ENCODE measurements at regions of chr1 and their contacts with region 1.

Region 1: DNA sequence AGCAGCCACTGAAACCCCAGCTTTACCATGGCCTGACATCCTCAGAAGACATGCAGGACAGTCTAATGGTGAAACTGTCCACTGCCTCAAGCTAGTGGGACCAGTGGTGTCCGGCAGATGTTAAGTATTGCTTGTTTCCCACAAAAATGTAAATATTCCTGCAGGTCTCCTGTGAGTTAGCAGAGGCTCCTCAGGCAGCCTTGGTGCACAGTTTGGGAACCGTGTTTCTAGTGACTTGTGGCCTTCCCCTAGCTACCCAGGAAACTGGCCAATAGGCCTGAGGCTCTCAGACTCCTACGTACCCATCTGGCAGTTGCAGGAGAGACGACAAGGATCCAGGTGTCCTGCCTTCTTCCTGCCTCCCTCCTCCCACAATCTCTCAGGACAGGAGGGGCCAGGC is 142.4 kb downstream of the CAMTA1 start:
- DNase-seq: no peak
- H3K4me3 ChIP-seq: no peak overlapping the region
- H3K27ac ChIP-seq: no peak overlapping the region
- H3K4me1 ChIP-seq: peaks cover 0 to 10% (median 7%) of the 10 kb centered on the region in 4 donors
- H3K27me3 ChIP-seq: peaks cover 3% of the 10 kb centered on the region
- CTCF ChIP-seq: no peak
- EP300 ChIP-seq: no peak
- POLR2A ChIP-seq: no peak

Region 2: GRCh38 chr1:6082430-6082971 is 845.1 kb before region 1 on chr1:
- in situ Hi-C with region 1: no loop called
- intact Hi-C with region 1: no loop called
- DNase-seq: no peak
- H3K4me3 ChIP-seq: no peak overlapping the region
- H3K27ac ChIP-seq: no peak overlapping the region
- H3K4me1 ChIP-seq: peaks cover 0 to 20% (median 0%) of the 10 kb centered on the region in 4 donors
- H3K27me3 ChIP-seq: no peaks in the 10 kb centered on the region
- CTCF ChIP-seq: peak in 1 of 5 experiments; percentile 26
- EP300 ChIP-seq: no peak
- POLR2A ChIP-seq: no peak

Region 3: GRCh38 chr1:6854165-6854564 is 73.5 kb before region 1 on chr1:
- in situ Hi-C with region 1: no loop called
- intact Hi-C with region 1: no loop called
- DNase-seq: no peak
- H3K4me3 ChIP-seq: no peak overlapping the region
- H3K27ac ChIP-seq: no peak overlapping the region
- H3K4me1 ChIP-seq: peaks cover 0 to 7% (median 0%) of the 10 kb centered on the region in 4 donors
- H3K27me3 ChIP-seq: no peaks in the 10 kb centered on the region
- CTCF ChIP-seq: no peak
- EP300 ChIP-seq: no peak
- POLR2A ChIP-seq: no peak

Region 4: DNA sequence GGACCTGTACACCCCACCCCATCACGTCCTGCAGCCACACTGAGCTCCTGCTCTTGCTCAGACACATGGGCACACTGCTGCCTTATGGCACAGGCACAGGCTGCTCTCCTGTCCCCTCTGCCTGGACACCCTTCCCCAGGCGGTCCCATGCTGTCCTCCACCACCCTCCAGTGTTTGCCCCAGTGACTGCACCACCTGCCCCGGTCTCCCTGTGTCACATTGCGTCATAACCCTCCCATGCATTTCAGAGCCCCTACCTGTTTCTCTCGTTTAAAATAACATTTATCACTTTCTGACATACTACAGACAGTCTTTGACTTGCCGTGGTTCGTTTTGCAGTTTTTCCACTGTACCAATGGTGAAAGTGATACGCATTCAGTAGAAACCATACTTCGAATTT is 16.8 kb after region 1 on chr1:
- in situ Hi-C with region 1: no loop called
- intact Hi-C with region 1: no loop called
- DNase-seq: no peak
- H3K4me3 ChIP-seq: no peak overlapping the region
- H3K27ac ChIP-seq: no peak overlapping the region
- H3K4me1 ChIP-seq: no peaks in the 10 kb centered on the region
- H3K27me3 ChIP-seq: no peaks in the 10 kb centered on the region
- CTCF ChIP-seq: no peak
- EP300 ChIP-seq: no peak
- POLR2A ChIP-seq: no peak

Region 5: DNA sequence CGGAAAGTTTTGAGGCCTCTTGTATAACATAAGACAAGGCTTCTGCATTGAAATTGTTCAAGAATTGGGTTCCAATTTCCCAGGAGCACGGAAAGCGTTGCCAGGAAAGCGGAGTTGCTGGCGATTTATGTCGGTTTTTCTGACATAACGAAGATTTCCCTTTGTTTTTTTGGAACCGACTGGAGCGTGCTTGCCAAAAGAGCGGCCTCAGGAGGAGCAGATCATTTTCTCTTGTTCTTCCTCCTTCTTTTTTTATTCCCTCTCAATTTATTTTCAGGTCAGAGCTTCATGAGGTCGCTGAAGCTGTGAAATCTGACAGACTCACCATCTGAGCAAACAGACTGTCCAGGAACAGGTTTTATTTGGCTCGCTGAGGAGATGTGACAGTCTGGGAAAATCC is 133.1 kb after region 1 on chr1:
- in situ Hi-C with region 1: no loop called
- intact Hi-C with region 1: no loop called
- DNase-seq: no peak
- H3K4me3 ChIP-seq: no peak overlapping the region
- H3K27ac ChIP-seq: no peak overlapping the region
- H3K4me1 ChIP-seq: no peaks in the 10 kb centered on the region
- H3K27me3 ChIP-seq: no peaks in the 10 kb centered on the region
- CTCF ChIP-seq: no peak
- EP300 ChIP-seq: no peak
- POLR2A ChIP-seq: no peak

Region 6: GRCh38 chr1:7810395-7810794 is 882.8 kb after region 1 on chr1:
- in situ Hi-C with region 1: no loop called
- intact Hi-C with region 1: loop called (anchors 5 kb)
- DNase-seq: no peak
- H3K4me3 ChIP-seq: no peak overlapping the region
- H3K27ac ChIP-seq: no peak overlapping the region
- H3K4me1 ChIP-seq: no peaks in the 10 kb centered on the region
- H3K27me3 ChIP-seq: no peaks in the 10 kb centered on the region
- CTCF ChIP-seq: no peak
- EP300 ChIP-seq: no peak
- POLR2A ChIP-seq: no peak

Measured in transverse colon (tissue), 4 donors.